Activated naive CD4-positive, alpha-beta T cell treated with anti-CD3 and anti-CD28 coated beads for 36 hours (primary cell): ENCODE measurements at regions of chr3 and their contacts with region 1.

Region 1: GRCh38 chr3:93855406-93855805 is 118.3 kb downstream of the PROS1 start:
- DNase-seq: no peak
- H3K4me3 Mint-ChIP-seq: no peak overlapping the region
- H3K27ac Mint-ChIP-seq: no peak overlapping the region
- H3K4me1 Mint-ChIP-seq: no peaks in the 10 kb centered on the region
- H3K27me3 Mint-ChIP-seq: no peaks in the 10 kb centered on the region

Region 2: DNA sequence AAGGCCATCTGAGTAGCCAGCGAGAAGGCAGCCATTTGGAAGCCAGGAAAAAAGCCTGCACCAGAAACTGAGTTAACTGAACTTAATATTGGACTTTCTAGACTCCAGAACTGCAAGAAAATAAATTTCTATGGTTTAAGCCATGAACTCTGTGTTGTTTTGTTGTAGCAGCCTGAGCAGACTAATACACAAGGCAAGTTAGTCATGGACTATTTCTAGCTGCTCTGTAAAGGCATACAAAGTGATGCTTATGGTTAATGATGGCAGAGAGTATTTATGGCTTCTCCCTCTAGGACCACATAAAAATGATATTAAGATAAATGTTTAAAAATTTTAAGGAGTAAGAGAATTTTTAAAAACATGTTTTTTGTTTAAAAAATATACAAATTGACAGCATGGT is 81.1 kb after region 1 on chr3:
- CTCF ChIA-PET with region 1: no interaction called
- intact Hi-C with region 1: loop called (anchors 10 kb)
- DNase-seq: no peak
- H3K4me3 Mint-ChIP-seq: no peak overlapping the region
- H3K27ac Mint-ChIP-seq: no peak overlapping the region
- H3K4me1 Mint-ChIP-seq: no peaks in the 10 kb centered on the region
- H3K27me3 Mint-ChIP-seq: no peaks in the 10 kb centered on the region